ENCODE measurements at regions of chrX and their contacts with region 1.

Region 1: GRCh38 chrX:81201671-81202455 is at the starts of genes HMGN5 and SH3BGRL:
- DNase-seq: peak; percentile 83
- H3K4me3 Mint-ChIP-seq: peak within 1 kb of the TSS; percentile 88
- H3K27ac Mint-ChIP-seq: peak within 1 kb of the TSS; percentile 95
- H3K4me1 Mint-ChIP-seq: peaks cover 15% of the 10 kb centered on the region
- H3K27me3 Mint-ChIP-seq: no peaks in the 10 kb centered on the region
- CTCF ChIP-seq: no peak
- total RNA-seq, gene HMGN5: 6.6 and 11.8 TPM in 2 replicates
- total RNA-seq, gene SH3BGRL: 43.9 and 53.4 TPM in 2 replicates

Region 2: GRCh38 chrX:80523643-80524042 is 678.2 kb before region 1 on chrX:
- CTCF ChIA-PET with region 1: no interaction called
- POLR2A ChIA-PET with region 1: no interaction called
- intact Hi-C with region 1: no loop called
- DNase-seq: no peak
- H3K4me3 Mint-ChIP-seq: no peak overlapping the region
- H3K27ac Mint-ChIP-seq: no peak overlapping the region
- H3K4me1 Mint-ChIP-seq: no peaks in the 10 kb centered on the region
- H3K27me3 Mint-ChIP-seq: no peaks in the 10 kb centered on the region
- CTCF ChIP-seq: no peak

Region 3: GRCh38 chrX:81121513-81122382 is 80.1 kb before region 1 on chrX:
- CTCF ChIA-PET with region 1: no interaction called
- POLR2A ChIA-PET with region 1: interaction called, 33 read pairs
- intact Hi-C with region 1: no loop called
- DNase-seq: peak; percentile 94
- H3K4me3 Mint-ChIP-seq: peak overlapping the region; percentile 80
- H3K27ac Mint-ChIP-seq: peak overlapping the region; percentile 69
- H3K4me1 Mint-ChIP-seq: no peaks in the 10 kb centered on the region
- H3K27me3 Mint-ChIP-seq: no peaks in the 10 kb centered on the region
- CTCF ChIP-seq: no peak

Region 4: GRCh38 chrX:81259020-81259713 is 57.3 kb after region 1 on chrX:
- CTCF ChIA-PET with region 1: no interaction called
- POLR2A ChIA-PET with region 1: interaction called, 55 read pairs
- intact Hi-C with region 1: loop called (anchors 1 kb)
- DNase-seq: peak; percentile 4
- H3K4me3 Mint-ChIP-seq: peak overlapping the region; percentile 49
- H3K27ac Mint-ChIP-seq: peak overlapping the region; percentile 86
- H3K4me1 Mint-ChIP-seq: peaks cover 16% of the 10 kb centered on the region
- H3K27me3 Mint-ChIP-seq: no peaks in the 10 kb centered on the region
- CTCF ChIP-seq: no peak

Region 5: GRCh38 chrX:81301877-81302276 is 100.0 kb after region 1 on chrX:
- CTCF ChIA-PET with region 1: interaction called, 3 read pairs
- POLR2A ChIA-PET with region 1: interaction called, 10 read pairs
- intact Hi-C with region 1: no loop called
- DNase-seq: peak; percentile 23
- H3K4me3 Mint-ChIP-seq: no peak overlapping the region
- H3K27ac Mint-ChIP-seq: no peak overlapping the region
- H3K4me1 Mint-ChIP-seq: no peaks in the 10 kb centered on the region
- H3K27me3 Mint-ChIP-seq: no peaks in the 10 kb centered on the region
- CTCF ChIP-seq: no peak

Region 6: GRCh38 chrX:81615979-81616378 is 414.1 kb after region 1 on chrX:
- CTCF ChIA-PET with region 1: no interaction called
- POLR2A ChIA-PET with region 1: no interaction called
- intact Hi-C with region 1: no loop called
- DNase-seq: no peak
- H3K4me3 Mint-ChIP-seq: no peak overlapping the region
- H3K27ac Mint-ChIP-seq: no peak overlapping the region
- H3K4me1 Mint-ChIP-seq: no peaks in the 10 kb centered on the region
- H3K27me3 Mint-ChIP-seq: no peaks in the 10 kb centered on the region
- CTCF ChIP-seq: no peak